Posterior cingulate gyrus (tissue), 11 donors: ENCODE measurements at regions of chr3 and their contacts with region 1.

Region 1: DNA sequence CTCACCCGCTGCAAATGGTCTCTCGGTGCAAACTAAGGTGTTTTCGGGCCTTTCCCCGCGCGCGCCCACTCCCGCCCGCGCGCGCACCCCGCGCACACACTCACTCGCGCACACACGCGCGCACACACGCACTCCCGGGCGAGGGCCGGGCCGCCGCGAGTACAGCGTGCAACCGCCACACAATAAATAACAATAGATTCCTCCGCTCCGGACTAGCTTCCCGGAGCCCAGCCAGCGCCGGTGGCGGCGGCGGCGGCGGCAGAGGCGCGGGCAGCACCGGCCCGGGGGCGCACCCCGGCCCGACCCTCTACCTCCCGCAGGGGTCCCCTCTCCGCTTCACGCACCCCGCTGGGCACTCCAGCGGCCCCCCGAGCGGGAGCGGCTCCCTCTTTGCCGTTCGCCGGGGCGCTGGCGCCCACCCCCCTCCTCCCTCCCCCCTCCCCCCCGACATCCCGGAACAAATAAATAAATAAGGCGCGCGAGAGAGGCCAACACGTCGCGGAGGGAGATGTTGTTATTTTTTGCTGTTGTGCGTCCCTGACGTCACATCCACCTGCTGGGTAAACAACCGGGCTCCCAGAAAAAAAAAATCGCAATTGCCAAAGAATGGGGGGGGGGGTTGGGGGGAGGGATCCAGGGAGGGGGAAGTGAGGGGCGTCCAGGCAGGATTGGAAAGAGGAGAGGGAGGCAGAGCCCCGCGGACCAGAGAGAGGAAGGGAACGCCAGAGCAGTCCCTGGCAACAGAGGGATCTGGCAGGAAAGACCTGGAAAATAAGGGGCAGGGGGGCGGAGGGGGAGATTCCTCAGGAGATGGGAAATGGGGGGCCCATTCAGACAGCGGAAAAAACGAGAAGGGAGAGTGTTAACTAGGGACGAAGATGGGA is at the start of gene FOXP1:
- DNase-seq: peak; percentile 56 to 96 (median 72)

Region 2: GRCh38 chr3:70291097-70291482 is 1292.7 kb before region 1 on chr3:
- intact Hi-C with region 1: no loop called
- DNase-seq: no peak

Region 3: GRCh38 chr3:71006810-71007785 is 576.7 kb before region 1 on chr3:
- intact Hi-C with region 1: loop called (anchors 5 kb)
- DNase-seq: no peak

Region 4: GRCh38 chr3:71130471-71131374 is 453.1 kb before region 1 on chr3:
- intact Hi-C with region 1: loop called (anchors 10 kb)
- DNase-seq: peak in 5 of 10 donors; percentile 25 to 83 (median 38)

Region 5: GRCh38 chr3:71305231-71306206 is 278.3 kb before region 1 on chr3:
- intact Hi-C with region 1: loop called (anchors 2 kb)
- DNase-seq: peak in 4 of 10 donors; percentile 14 to 87 (median 44)

Region 6: GRCh38 chr3:71542521-71543370 is 41.1 kb before region 1 on chr3:
- intact Hi-C with region 1: loop called (anchors 5 kb)
- DNase-seq: peak; percentile 47 to 96 (median 64)